ENCODE measurements at regions of chr6 and their contacts with region 1.

Region 1: DNA sequence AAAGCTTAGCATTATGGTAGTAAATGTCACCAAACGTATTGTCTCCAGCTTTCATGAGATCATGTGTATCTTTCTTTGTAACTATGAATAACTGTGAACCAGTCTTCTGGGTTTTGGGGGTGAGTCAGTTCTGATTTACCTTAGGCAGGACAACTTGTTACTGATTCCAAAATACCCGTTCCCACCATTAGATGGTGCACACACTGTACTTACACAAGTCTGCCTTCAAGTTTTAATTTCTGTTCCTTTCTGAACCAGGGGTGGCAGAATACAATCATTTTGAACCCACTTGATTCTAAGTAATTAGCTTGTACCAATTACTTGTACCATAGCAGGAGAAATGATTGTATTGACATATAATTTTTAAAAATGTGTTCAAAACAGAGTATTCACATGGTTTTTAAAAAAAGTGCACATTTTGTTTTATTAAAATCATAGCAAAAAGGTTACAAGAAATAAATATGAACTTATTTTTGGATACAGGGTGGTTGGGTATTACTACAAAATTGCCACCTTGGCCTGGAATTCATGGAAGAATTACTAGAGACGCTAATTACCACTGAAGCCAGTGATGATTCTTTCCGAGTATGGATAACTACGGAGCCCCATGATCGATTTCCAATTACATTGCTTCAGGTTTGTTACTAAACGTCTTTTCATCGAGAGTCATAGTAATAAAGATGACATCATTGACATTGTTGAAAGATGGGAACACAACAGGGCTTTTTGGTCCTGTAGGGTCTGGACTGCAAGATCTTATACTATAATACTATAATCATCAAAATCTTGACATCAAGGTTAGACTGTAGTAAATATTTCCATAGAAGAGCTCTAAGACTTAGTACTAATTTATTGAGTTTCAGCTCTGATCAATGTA is 75.2 kb upstream of the GLP1R start:
- DNase-seq: peak; percentile 13
- H3K4me3 Mint-ChIP-seq: no peak overlapping the region
- H3K27ac Mint-ChIP-seq: no peak overlapping the region
- H3K4me1 Mint-ChIP-seq: peaks cover 2% of the 10 kb centered on the region
- H3K27me3 Mint-ChIP-seq: peaks cover 13% of the 10 kb centered on the region

Region 2: GRCh38 chr6:38370653-38371601 is 602.5 kb before region 1 on chr6:
- CTCF ChIA-PET with region 1: no interaction called
- POLR2A ChIA-PET with region 1: no interaction called
- intact Hi-C with region 1: no loop called
- DNase-seq: no peak
- H3K4me3 Mint-ChIP-seq: no peak overlapping the region
- H3K27ac Mint-ChIP-seq: no peak overlapping the region
- H3K4me1 Mint-ChIP-seq: no peaks in the 10 kb centered on the region
- H3K27me3 Mint-ChIP-seq: no peaks in the 10 kb centered on the region

Region 3: GRCh38 chr6:39153766-39154397 is 180.5 kb after region 1 on chr6:
- CTCF ChIA-PET with region 1: interaction called, 3 read pairs
- POLR2A ChIA-PET with region 1: no interaction called
- intact Hi-C with region 1: loop called (anchors 1 kb)
- DNase-seq: peak; percentile 60
- H3K4me3 Mint-ChIP-seq: no peak overlapping the region
- H3K27ac Mint-ChIP-seq: peak overlapping the region; percentile 75
- H3K4me1 Mint-ChIP-seq: peaks cover 25% of the 10 kb centered on the region
- H3K27me3 Mint-ChIP-seq: peaks cover 23% of the 10 kb centered on the region

Region 4: DNA sequence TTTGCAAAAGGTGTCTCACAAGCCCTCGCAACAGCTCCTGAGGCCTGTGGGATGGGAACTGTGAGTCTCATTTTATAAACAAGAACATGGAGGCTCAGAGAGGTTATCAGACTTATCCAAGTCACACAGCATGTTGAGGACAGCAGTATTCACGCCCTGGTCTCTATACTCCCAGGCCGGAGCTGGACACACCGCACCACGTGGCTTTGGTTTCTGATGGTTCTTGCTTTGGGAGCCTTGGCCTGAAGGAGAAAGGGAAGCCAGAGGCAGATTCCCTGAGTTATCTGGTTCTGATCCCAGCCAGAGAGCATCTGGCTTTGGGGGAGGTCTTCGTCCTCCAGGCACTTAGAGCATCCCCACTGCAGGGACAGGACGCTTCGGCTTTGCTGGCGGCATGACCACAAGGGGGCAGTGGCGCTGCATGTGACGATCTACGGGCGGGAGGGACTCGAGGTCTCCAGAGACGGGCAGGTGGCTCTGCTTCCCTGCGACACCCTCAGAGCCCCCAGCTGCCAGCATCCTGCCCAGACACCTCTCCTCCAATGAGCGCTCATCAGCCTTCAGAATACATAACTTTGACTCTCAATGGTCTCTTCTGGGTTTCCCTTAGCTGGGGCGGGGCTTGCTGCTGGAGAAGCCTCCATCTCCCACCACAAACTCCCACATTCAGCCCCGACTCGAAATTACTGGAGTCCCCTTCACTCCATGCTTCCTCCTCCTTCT is 192.9 kb after region 1 on chr6:
- CTCF ChIA-PET with region 1: interaction called, 14 read pairs
- POLR2A ChIA-PET with region 1: no interaction called
- intact Hi-C with region 1: no loop called
- DNase-seq: peak; percentile 90
- H3K4me3 Mint-ChIP-seq: no peak overlapping the region
- H3K27ac Mint-ChIP-seq: no peak overlapping the region
- H3K4me1 Mint-ChIP-seq: peaks cover 4% of the 10 kb centered on the region
- H3K27me3 Mint-ChIP-seq: no peaks in the 10 kb centered on the region